ENCODE measurements at regions of chr22 and their contacts with region 1.

Region 1: GRCh38 chr22:37608477-37609239 is at the start of gene GGA1:
- DNase-seq: peak; percentile 97 to 99 (median 98)
- H3K4me3 ChIP-seq: peak within 1 kb of the TSS; percentile 30 to 85
- H3K4me3 Mint-ChIP-seq: peak within 1 kb of the TSS; percentile 90 to 98 (median 94)
- H3K27ac ChIP-seq: peak within 1 kb of the TSS; percentile 88
- H3K27ac Mint-ChIP-seq: peak within 1 kb of the TSS; percentile 94 to 99 (median 98)
- H3K4me1 ChIP-seq: peaks cover 64% of the 10 kb centered on the region
- H3K4me1 Mint-ChIP-seq: peaks cover 35 to 68% (median 50%) of the 10 kb centered on the region in 4 donors
- H3K27me3 ChIP-seq: no peaks in the 10 kb centered on the region
- H3K27me3 Mint-ChIP-seq: no peaks in the 10 kb centered on the region
- total RNA-seq, gene GGA1: 108 to 109 TPM

Region 2: GRCh38 chr22:37588546-37589215 is 20.0 kb before region 1 on chr22:
- CTCF ChIA-PET with region 1: interaction called, 122 read pairs
- POLR2A ChIA-PET with region 1: interaction called, 43 read pairs
- intact Hi-C with region 1: loop called (anchors 1 kb)
- DNase-seq: no peak
- H3K4me3 ChIP-seq: no peak overlapping the region
- H3K4me3 Mint-ChIP-seq: no peak overlapping the region
- H3K27ac ChIP-seq: no peak overlapping the region
- H3K27ac Mint-ChIP-seq: peak overlapping the region in 1 of 7 donors; percentile 55
- H3K4me1 ChIP-seq: peaks cover 6% of the 10 kb centered on the region
- H3K4me1 Mint-ChIP-seq: peaks cover 9 to 14% (median 11%) of the 10 kb centered on the region in 4 donors
- H3K27me3 ChIP-seq: no peaks in the 10 kb centered on the region
- H3K27me3 Mint-ChIP-seq: peaks cover 11 to 12% of the 10 kb centered on the region in 2 donors

Region 3: GRCh38 chr22:37643225-37643847 is 34.7 kb after region 1 on chr22:
- CTCF ChIA-PET with region 1: interaction called, 114 read pairs
- POLR2A ChIA-PET with region 1: interaction called, 94 read pairs
- intact Hi-C with region 1: loop called (anchors 1 kb)
- DNase-seq: peak; percentile 75 to 84 (median 80)
- H3K4me3 ChIP-seq: no peak overlapping the region
- H3K4me3 Mint-ChIP-seq: peak overlapping the region; percentile 15 to 82 (median 58)
- H3K27ac ChIP-seq: peak overlapping the region; percentile 45
- H3K27ac Mint-ChIP-seq: peak overlapping the region; percentile 68 to 91 (median 88)
- H3K4me1 ChIP-seq: peaks cover 44% of the 10 kb centered on the region
- H3K4me1 Mint-ChIP-seq: peaks cover 16 to 49% (median 32%) of the 10 kb centered on the region in 4 donors
- H3K27me3 ChIP-seq: no peaks in the 10 kb centered on the region
- H3K27me3 Mint-ChIP-seq: no peaks in the 10 kb centered on the region

Region 4: DNA sequence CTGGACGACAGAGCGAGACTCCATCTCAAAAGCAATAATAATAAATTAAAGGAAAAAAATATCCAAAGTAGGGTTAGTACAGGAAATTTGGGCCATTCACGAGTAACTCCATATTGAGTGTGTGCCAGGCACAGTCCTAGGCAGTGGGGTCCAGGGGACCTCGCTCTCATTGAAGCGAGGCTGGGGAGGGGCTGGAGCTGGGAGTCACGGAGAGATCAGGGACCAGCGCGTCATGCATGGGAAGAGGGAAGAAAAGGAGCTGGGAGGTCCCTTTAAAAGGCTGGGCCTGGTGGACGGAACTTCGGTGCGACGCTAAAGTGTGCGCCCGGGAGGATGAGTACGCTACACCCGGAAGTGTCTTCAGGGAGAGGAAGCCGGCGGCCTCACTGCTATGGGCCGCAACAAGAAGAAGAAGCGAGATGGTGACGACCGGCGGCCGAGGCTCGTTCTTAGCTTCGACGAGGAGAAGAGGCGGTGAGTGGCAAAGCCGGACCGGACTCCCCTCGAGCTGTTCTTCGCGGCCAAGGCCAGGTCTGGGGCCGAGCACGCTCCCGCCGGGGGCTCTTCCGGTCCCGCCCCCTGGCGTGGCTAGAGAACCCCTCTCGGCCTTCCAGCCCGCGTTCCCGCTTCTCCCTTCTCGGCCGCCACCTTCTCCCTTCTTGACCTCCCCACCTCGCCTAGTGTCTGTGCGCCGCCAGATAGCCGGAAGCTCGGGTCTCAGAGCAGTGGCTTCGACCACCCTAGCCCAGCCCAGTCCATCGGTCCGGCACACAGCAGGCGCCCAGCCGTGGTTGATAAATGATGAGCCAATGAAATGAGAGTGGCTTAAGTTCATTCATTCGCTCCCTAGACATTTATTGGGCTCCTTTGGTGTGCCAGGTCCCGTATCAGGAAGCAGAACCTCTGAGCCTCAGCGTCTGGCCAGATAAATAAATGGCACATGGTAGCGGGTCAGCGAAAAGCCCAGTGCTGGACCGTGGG is 77.6 kb after region 1 on chr22 and contains the start of gene NOL12:
- CTCF ChIA-PET with region 1: interaction called, 136 read pairs
- POLR2A ChIA-PET with region 1: interaction called, 47 read pairs
- intact Hi-C with region 1: loop called (anchors 1 kb)
- DNase-seq: peak; percentile 76 to 82 (median 77)
- H3K4me3 ChIP-seq: peak within 1 kb of the TSS; percentile 79 to 96
- H3K4me3 Mint-ChIP-seq: peak within 1 kb of the TSS; percentile 91 to 98 (median 96)
- H3K27ac ChIP-seq: peak within 1 kb of the TSS; percentile 92
- H3K27ac Mint-ChIP-seq: peak within 1 kb of the TSS; percentile 91 to 98 (median 95)
- H3K4me1 ChIP-seq: peaks cover 25% of the 10 kb centered on the region
- H3K4me1 Mint-ChIP-seq: peaks cover 16 to 34% (median 25%) of the 10 kb centered on the region in 4 donors
- H3K27me3 ChIP-seq: no peaks in the 10 kb centered on the region
- H3K27me3 Mint-ChIP-seq: no peaks in the 10 kb centered on the region
- total RNA-seq, gene NOL12: 50.3 to 52.0 TPM

Region 5: GRCh38 chr22:37849089-37849751 is 240.6 kb after region 1 on chr22 and contains the start of gene EIF3L:
- CTCF ChIA-PET with region 1: no interaction called
- POLR2A ChIA-PET with region 1: interaction called, 4 read pairs
- intact Hi-C with region 1: loop called (anchors 1 kb)
- DNase-seq: peak; percentile 81 to 88 (median 85)
- H3K4me3 ChIP-seq: peak within 1 kb of the TSS; percentile 61 to 94
- H3K4me3 Mint-ChIP-seq: peak within 1 kb of the TSS; percentile 83 to 98 (median 93)
- H3K27ac ChIP-seq: peak within 1 kb of the TSS; percentile 87
- H3K27ac Mint-ChIP-seq: peak within 1 kb of the TSS; percentile 91 to 99 (median 97)
- H3K4me1 ChIP-seq: peaks cover 29% of the 10 kb centered on the region
- H3K4me1 Mint-ChIP-seq: peaks cover 28 to 58% (median 43%) of the 10 kb centered on the region in 4 donors
- H3K27me3 ChIP-seq: no peaks in the 10 kb centered on the region
- H3K27me3 Mint-ChIP-seq: no peaks in the 10 kb centered on the region
- total RNA-seq, gene EIF3L: 550 to 571 TPM

Measured in CD4-positive, alpha-beta memory T cell (primary cell).